Activated naive CD4-positive, alpha-beta T cell treated with anti-CD3 and anti-CD28 coated beads for 36 hours (primary cell): ENCODE measurements at regions of chr22 and their contacts with region 1.

Region 1: DNA sequence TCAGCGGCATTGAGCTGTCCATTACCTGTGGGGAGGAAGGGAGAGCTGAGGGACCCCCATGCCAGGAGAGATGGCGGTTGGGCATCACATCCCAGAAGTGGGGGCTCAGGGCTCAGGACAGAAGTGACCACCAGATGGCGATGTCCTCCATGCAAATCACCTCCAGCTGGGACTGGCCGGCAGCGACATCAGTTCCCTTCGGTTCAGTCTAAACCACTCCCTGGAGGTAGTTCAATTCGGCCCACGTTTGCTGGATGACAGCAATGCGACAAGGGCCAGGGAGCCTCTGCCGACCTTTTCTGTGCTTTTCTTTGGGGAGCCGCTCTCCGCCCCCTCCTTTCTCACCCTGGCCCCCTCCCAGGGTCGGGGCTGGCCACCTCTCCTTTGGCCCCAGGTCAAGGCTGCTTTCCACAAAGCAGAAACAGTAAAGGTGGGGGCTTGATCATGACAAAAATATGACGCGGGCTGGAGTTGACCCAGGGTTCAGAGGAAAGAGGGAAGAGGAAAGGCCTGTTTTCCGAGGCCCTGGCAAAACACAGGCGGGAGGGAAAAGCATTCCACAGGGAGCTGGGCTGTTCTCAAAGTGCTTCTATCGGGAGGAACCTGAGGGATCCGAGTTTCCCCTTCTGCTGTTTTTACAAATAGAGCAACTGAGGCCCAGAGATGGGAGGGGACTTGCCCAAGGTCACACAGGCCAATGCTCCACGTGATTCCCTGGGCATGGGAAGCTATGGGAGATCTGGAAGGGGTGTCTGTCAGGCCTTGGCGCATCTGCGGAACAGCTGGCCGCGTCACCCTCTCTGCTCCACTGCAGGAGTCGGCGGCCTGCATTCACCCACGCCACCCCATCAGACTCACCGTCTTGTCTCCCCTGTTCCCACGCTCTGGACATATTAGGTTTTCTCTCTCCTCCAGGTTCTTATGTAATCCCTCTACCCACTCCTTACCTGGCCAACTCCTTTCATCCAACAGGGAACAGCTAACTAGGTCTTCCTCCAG is 54.7 kb downstream of the FBXO7 start:
- DNase-seq: peak; percentile 83
- H3K4me3 Mint-ChIP-seq: no peak overlapping the region
- H3K27ac Mint-ChIP-seq: no peak overlapping the region
- H3K4me1 Mint-ChIP-seq: no peaks in the 10 kb centered on the region
- H3K27me3 Mint-ChIP-seq: no peaks in the 10 kb centered on the region

Region 2: GRCh38 chr22:32396746-32397145 is 132.5 kb before region 1 on chr22:
- CTCF ChIA-PET with region 1: no interaction called
- intact Hi-C with region 1: no loop called
- DNase-seq: no peak
- H3K4me3 Mint-ChIP-seq: no peak overlapping the region
- H3K27ac Mint-ChIP-seq: no peak overlapping the region
- H3K4me1 Mint-ChIP-seq: peaks cover 7% of the 10 kb centered on the region
- H3K27me3 Mint-ChIP-seq: no peaks in the 10 kb centered on the region

Region 3: GRCh38 chr22:32482708-32483107 is 46.6 kb before region 1 on chr22:
- CTCF ChIA-PET with region 1: no interaction called
- intact Hi-C with region 1: no loop called
- DNase-seq: peak; percentile 64
- H3K4me3 Mint-ChIP-seq: no peak overlapping the region
- H3K27ac Mint-ChIP-seq: no peak overlapping the region
- H3K4me1 Mint-ChIP-seq: peaks cover 35% of the 10 kb centered on the region
- H3K27me3 Mint-ChIP-seq: no peaks in the 10 kb centered on the region

Region 4: GRCh38 chr22:32644252-32645100 is 115.2 kb after region 1 on chr22:
- CTCF ChIA-PET with region 1: interaction called, 3 read pairs
- intact Hi-C with region 1: loop called (anchors 10 kb)
- DNase-seq: peak; percentile 44
- H3K4me3 Mint-ChIP-seq: no peak overlapping the region
- H3K27ac Mint-ChIP-seq: peak overlapping the region; percentile 39
- H3K4me1 Mint-ChIP-seq: peaks cover 25% of the 10 kb centered on the region
- H3K27me3 Mint-ChIP-seq: no peaks in the 10 kb centered on the region

Region 5: DNA sequence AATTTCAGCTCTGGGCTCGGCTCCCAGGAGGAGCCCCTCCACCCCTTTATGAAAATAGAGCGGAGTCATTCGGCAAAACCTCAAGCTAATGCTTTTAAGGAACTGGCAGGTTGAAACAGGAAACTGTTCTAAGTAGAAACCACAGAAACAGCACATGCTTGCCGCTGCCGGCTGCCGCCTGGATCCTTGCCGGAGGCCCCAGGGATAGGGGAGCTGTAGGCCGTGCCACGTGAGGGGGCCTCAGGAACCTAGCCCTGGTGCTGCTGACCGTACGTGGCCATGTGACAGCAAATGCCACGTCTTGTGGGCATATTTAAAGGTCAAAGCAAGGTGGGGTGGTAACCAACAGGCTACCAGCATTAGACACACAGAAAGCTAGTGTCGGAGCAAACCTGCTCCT is 194.4 kb after region 1 on chr22:
- CTCF ChIA-PET with region 1: no interaction called
- intact Hi-C with region 1: no loop called
- DNase-seq: peak; percentile 72
- H3K4me3 Mint-ChIP-seq: no peak overlapping the region
- H3K27ac Mint-ChIP-seq: no peak overlapping the region
- H3K4me1 Mint-ChIP-seq: peaks cover 41% of the 10 kb centered on the region
- H3K27me3 Mint-ChIP-seq: peaks cover 6% of the 10 kb centered on the region

Region 6: DNA sequence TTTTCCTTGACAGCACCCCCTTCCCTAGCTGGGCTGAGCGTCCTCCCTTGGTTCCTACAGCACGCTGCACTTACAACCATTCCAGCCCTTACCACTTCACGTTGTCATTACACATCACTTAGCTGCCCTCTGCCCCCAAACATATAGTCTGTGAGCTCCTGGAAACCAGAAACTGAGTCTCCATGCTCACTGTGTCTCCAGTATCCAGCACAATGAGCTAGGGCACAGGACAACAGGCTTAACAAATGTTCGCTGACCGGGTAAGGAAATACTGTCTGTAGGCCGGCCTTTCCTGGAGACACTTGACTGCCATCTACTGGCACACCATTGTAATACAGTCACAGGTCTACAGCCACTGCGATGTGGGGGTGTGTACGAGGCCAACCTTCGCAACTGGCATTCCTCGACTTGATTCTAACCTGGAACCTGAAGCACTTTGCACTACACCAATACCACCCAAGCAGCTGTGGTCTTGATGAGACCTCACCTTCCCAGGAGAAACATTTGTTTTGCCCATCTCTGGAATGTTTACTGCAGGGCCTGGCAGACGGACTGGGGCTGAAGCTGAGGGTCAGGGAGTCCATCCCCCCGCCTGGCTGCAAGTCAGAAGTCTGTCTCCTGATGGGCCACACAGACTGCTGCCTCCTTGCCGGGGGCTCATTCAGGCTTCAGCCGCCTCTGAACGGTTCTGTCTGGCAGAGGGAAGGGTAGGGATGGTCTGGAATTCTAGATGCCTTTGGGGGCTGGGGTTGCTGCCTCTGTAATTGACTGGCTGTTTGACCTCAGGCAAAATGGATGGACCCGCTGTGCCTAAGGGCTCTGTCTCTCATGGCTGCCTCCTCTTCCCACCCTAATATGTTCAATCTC is 456.8 kb after region 1 on chr22:
- CTCF ChIA-PET with region 1: interaction called, 7 read pairs
- intact Hi-C with region 1: loop called (anchors 5 kb)
- DNase-seq: peak; percentile 70
- H3K4me3 Mint-ChIP-seq: no peak overlapping the region
- H3K27ac Mint-ChIP-seq: no peak overlapping the region
- H3K4me1 Mint-ChIP-seq: no peaks in the 10 kb centered on the region
- H3K27me3 Mint-ChIP-seq: no peaks in the 10 kb centered on the region

Region 7: DNA sequence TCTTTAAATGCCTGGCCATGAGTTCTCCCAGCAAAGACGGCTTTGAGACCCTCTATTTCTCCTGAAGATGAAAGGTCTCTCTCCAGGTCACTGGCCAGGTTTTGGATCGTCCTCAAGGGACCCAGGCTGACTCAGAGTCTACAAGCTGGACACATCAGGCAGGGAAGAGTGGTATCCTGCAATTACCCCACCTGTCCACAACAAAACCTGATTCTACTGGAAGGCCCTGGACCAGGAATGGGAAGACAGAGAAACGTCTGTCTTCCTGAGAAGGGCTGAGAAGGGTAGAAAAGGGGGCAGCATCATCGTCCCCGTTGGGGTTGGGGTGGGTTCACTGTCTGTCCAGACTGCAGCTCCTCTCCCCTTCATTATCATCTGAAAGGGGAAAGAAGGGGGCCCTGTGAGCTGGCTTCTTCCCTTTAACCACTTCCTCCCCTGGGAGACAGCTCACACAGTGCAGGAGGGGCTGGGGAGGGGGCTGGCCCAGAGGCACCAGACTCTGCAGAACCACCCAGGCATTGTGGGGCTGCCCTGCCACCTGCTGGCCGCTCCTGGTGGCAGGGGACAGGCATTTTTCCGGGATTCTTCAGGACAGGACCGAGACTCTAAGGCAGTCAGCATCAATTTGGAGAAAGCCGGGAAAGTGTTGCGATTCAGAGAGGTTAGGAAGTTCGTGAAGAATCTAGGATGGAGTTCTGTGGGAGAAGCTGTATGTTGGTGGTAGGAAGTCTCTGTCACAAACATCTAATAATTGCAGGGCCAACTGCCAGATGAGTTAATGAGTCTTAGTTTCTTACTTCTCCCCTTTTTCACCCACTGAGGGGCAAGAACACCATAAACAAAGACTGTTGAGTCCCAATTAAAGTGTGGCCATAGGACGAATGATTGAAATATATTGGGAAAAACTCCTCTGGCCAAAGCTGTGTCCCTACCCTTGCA is 471.3 kb after region 1 on chr22:
- CTCF ChIA-PET with region 1: no interaction called
- intact Hi-C with region 1: loop called (anchors 1 kb)
- DNase-seq: peak; percentile 44
- H3K4me3 Mint-ChIP-seq: no peak overlapping the region
- H3K27ac Mint-ChIP-seq: no peak overlapping the region
- H3K4me1 Mint-ChIP-seq: no peaks in the 10 kb centered on the region
- H3K27me3 Mint-ChIP-seq: peaks cover 10% of the 10 kb centered on the region